Activated B cell treated with CpG ODN at 0.5 μM for 24 hours (primary cell): ENCODE measurements at regions of chr10 and their contacts with region 1.

Region 1: GRCh38 chr10:67697724-67698131 is 1.7 kb upstream of the CTNNA3 start:
- DNase-seq: no peak
- ATAC-seq: peak; percentile 77
- H3K4me3 Mint-ChIP-seq: no peak overlapping the region
- H3K27ac Mint-ChIP-seq: no peak overlapping the region
- H3K4me1 Mint-ChIP-seq: no peaks in the 10 kb centered on the region
- H3K27me3 Mint-ChIP-seq: peaks cover 33% of the 10 kb centered on the region
- CTCF ChIP-seq: no peak

Region 2: DNA sequence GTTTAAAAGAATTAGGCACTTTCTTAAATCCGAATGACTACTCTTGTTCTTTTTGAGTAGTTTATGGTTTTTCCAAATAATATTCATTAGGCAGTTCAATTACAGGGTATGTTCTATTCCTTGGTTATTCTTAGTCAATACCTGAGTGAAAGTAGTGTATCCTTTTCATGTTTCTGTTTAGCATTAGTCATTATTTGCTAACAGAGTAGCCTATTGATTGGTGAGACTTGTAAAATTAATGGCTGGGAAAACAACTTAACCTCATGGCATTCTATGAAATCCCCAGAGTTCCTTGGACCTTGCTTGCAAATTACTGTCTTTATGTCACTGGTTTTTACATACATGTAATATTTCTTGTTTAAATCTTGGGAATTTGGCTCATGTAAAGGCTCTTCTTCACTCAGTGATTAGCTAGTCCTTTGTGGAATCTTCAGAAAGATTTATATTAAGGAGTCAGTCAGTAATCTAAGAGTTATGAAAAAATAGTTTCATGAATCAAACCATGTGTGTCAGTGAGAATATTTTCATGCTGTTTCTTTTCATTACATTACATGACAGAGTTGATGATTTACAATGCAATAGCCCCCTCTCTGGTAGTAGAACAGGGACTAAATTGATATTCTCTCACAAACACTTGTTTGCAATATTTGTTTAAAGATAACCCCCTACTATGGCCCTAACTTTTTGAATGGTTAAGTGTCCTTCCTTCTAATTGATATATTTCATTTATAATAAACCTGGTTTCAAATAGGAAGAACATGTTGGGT is 853.4 kb before region 1 on chr10:
- CTCF ChIA-PET with region 1: no interaction called
- POLR2A ChIA-PET with region 1: no interaction called
- intact Hi-C with region 1: no loop called
- DNase-seq: no peak
- ATAC-seq: no peak
- H3K4me3 Mint-ChIP-seq: no peak overlapping the region
- H3K27ac Mint-ChIP-seq: no peak overlapping the region
- H3K4me1 Mint-ChIP-seq: no peaks in the 10 kb centered on the region
- H3K27me3 Mint-ChIP-seq: no peaks in the 10 kb centered on the region
- CTCF ChIP-seq: no peak

Region 3: DNA sequence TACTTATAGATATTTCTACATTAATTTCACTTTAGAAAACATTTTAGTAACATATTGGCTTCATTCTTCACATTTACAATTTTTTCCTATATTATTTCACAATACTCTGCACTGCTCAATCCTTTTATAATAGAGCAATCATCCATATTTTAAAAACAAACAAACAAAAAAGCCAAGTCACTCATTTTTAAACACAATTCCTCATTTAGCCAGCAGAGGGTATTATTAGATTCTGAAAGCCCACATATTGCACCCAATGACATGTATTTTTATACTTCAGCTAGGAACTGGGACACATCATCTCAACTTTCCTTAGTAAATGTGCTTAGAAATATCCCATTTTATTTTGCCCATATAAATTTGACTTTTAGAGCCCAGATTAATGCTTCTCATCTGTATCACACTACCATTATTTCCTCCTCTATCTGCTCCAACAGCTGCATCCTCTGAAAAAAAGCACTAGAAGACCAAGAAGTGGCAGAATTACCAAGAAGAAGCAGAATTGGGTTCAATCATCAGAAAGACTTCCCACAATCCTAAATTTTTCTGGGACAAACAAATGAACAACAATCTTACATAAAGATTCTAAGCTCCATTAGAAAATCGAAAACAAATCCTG is 31.2 kb before region 1 on chr10:
- CTCF ChIA-PET with region 1: interaction called, 21 read pairs
- POLR2A ChIA-PET with region 1: no interaction called
- intact Hi-C with region 1: loop called (anchors 1 kb)
- DNase-seq: no peak
- ATAC-seq: no peak
- H3K4me3 Mint-ChIP-seq: no peak overlapping the region
- H3K27ac Mint-ChIP-seq: no peak overlapping the region
- H3K4me1 Mint-ChIP-seq: no peaks in the 10 kb centered on the region
- H3K27me3 Mint-ChIP-seq: peaks cover 3% of the 10 kb centered on the region
- CTCF ChIP-seq: no peak

Region 4: DNA sequence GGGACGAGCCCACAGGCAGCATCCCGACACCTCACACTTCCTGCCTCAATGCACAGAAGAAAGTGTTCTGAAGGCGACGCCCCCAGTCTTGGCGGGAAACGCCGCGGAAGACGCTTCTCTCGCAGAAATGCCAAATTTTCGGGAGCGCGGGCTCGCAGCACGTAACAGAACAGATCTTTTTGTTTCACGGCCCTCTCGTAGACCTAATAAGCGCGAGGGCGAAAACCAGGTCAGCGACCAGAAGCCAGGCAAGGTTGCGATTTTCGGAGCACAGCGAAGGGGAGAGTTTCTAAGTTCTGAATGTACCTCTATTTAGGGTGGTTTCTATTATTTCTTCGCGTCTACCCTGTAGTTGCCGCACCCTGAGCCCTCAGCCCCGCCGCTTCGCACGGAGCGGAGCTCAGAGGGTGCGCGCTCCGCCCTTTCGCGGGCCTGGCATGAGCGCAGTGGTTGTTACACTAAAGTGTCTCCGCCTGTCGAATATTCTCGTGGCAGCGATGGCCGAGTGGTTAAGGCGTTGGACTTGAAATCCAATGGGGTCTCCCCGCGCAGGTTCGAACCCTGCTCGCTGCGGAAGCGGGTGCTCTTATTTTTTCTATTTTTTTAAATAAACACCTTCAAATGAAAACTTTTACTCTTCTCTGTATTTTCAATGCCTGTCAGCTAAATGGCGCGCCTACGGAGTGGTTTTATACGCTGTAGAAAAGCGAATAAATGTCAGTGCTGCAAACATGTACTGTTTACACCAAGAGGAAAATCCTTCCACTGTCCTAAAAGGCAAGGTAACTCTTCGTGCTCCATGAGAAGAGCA is 66.5 kb after region 1 on chr10:
- CTCF ChIA-PET with region 1: interaction called, 12 read pairs
- POLR2A ChIA-PET with region 1: interaction called, 5 read pairs
- intact Hi-C with region 1: no loop called
- DNase-seq: peak; percentile 98
- ATAC-seq: peak; percentile 78
- H3K4me3 Mint-ChIP-seq: peak overlapping the region; percentile 94
- H3K27ac Mint-ChIP-seq: peak overlapping the region; percentile 99
- H3K4me1 Mint-ChIP-seq: peaks cover 31% of the 10 kb centered on the region
- H3K27me3 Mint-ChIP-seq: peaks cover 4% of the 10 kb centered on the region
- CTCF ChIP-seq: no peak

Region 5: DNA sequence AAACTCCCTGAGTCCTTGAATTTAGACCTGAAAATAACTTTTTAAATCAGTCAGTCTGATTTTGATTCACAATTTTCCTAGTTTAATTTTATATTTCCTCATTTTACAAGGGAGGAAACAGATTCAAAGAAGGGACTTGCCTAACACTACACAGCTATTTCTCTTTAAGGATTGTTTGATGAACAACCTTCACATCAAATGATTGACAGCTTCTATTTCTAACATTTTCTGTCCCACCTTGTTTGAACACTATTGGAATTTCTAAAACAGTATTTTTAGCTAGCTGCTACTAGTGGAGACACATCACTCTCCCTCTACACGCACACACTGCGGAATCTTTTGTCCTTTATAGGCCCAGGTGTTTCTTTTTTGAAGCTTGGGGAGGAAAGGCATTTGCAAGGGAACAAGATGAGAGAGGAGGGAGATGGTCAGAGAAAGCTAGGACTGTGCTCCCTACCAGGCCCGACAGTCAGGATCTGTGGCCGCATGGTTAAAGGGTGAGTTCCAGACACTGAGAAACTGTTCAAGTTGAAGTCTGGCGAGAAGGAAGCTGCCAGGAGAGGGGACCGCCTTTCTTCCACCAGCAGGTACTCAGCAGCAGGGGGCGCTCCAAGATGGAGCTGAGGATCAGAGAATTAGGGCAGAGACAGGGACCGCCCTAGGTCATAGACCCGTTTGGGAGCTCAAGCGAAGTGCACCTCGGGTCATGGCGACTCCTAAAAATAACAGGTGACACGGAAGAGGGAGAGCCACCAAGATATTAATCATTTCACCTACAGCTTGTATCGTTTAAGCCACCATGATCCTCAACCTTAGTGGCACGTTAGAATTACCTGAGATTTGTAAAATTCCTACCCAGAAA is 90.5 kb after region 1 on chr10:
- CTCF ChIA-PET with region 1: interaction called, 27 read pairs
- POLR2A ChIA-PET with region 1: no interaction called
- intact Hi-C with region 1: no loop called
- DNase-seq: peak; percentile 58
- ATAC-seq: peak; percentile 80
- H3K4me3 Mint-ChIP-seq: peak overlapping the region; percentile 52
- H3K27ac Mint-ChIP-seq: no peak overlapping the region
- H3K4me1 Mint-ChIP-seq: peaks cover 23% of the 10 kb centered on the region
- H3K27me3 Mint-ChIP-seq: no peaks in the 10 kb centered on the region
- CTCF ChIP-seq: no peak

Region 6: GRCh38 chr10:68301790-68302502 is 604.2 kb after region 1 on chr10:
- CTCF ChIA-PET with region 1: interaction called, 3 read pairs
- POLR2A ChIA-PET with region 1: no interaction called
- intact Hi-C with region 1: loop called (anchors 2 kb)
- DNase-seq: no peak
- ATAC-seq: peak; percentile 62
- H3K4me3 Mint-ChIP-seq: no peak overlapping the region
- H3K27ac Mint-ChIP-seq: peak overlapping the region; percentile 90
- H3K4me1 Mint-ChIP-seq: peaks cover 31% of the 10 kb centered on the region
- H3K27me3 Mint-ChIP-seq: no peaks in the 10 kb centered on the region
- CTCF ChIP-seq: no peak